Heart right ventricle (tissue), 16 donors: ENCODE measurements at regions of chr16 and their contacts with region 1.

Region 1: GRCh38 chr16:68590201-68590994 is 51.3 kb downstream of the ZFP90 start:
- DNase-seq: peak in 1 of 2 donors; percentile 44
- ATAC-seq: peak in 4 of 8 donors; percentile 8 to 53 (median 38)
- H3K4me3 ChIP-seq: no peak overlapping the region
- H3K27ac ChIP-seq: no peak overlapping the region
- H3K4me1 ChIP-seq: no peaks in the 10 kb centered on the region
- H3K27me3 ChIP-seq: peaks cover 0 to 8% (median 0%) of the 10 kb centered on the region in 7 donors
- CTCF ChIP-seq: peak in 7 of 9 donors; percentile 26 to 56 (median 44)

Region 2: GRCh38 chr16:68244903-68245853 is 345.2 kb before region 1 on chr16 and contains the start of gene PLA2G15:
- intact Hi-C with region 1: no loop called
- DNase-seq: peak; percentile 99
- ATAC-seq: peak; percentile 93 to 98 (median 96)
- H3K4me3 ChIP-seq: peak within 1 kb of the TSS; percentile 77 to 100 (median 87)
- H3K27ac ChIP-seq: peak within 1 kb of the TSS; percentile 8 to 95 (median 86)
- H3K4me1 ChIP-seq: peaks cover 10 to 56% (median 49%) of the 10 kb centered on the region in 9 donors
- H3K27me3 ChIP-seq: no peaks in the 10 kb centered on the region
- CTCF ChIP-seq: peak in 1 of 9 donors; percentile 6
- total RNA-seq, gene PLA2G15: 31.0 to 62.1 (median 44.0) TPM

Region 3: GRCh38 chr16:68275611-68276191 is 314.7 kb before region 1 on chr16:
- intact Hi-C with region 1: no loop called
- DNase-seq: no peak
- ATAC-seq: no peak
- H3K4me3 ChIP-seq: no peak overlapping the region
- H3K27ac ChIP-seq: peak overlapping the region; percentile 56 to 82 (median 66)
- H3K4me1 ChIP-seq: peaks cover 0 to 71% (median 44%) of the 10 kb centered on the region in 9 donors
- H3K27me3 ChIP-seq: no peaks in the 10 kb centered on the region
- CTCF ChIP-seq: no peak

Region 4: GRCh38 chr16:68800257-68800875 is 210.0 kb after region 1 on chr16:
- intact Hi-C with region 1: loop called in 1 of 10 experiments (anchors 2 kb)
- DNase-seq: peak in 1 of 2 donors; percentile 45
- ATAC-seq: peak in 6 of 8 donors; percentile 44 to 74 (median 61)
- H3K4me3 ChIP-seq: no peak overlapping the region
- H3K27ac ChIP-seq: no peak overlapping the region
- H3K4me1 ChIP-seq: no peaks in the 10 kb centered on the region
- H3K27me3 ChIP-seq: no peaks in the 10 kb centered on the region
- CTCF ChIP-seq: peak; percentile 23 to 71 (median 54)